Activated naive CD4-positive, alpha-beta T cell treated with anti-CD3 and anti-CD28 coated beads, Interleukin-2, amount 10 ng/mL, durations not matched to agents 7 days and 5 days (primary cell): ENCODE measurements at regions of chr19 and their contacts with region 1.

Region 1: DNA sequence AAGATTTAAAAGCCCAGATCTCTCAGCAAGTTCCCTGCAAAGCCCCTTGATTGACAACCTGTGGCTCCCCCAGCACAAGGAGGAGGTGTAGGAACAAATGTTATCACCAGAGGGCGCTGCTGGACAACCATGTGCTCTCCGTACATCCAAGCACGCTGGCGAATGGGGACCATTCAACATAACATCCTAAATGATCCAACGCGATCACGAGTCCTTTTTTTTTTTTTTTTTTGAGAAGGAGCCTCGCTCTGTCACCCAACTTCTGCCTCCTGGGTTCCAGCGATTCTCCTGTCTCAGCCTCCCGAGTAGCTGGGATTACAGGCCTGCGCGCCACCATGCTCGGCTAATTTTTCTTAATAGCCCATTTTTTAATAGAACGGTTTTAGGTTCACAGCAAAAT is 52.0 kb downstream of the NWD1 start:
- DNase-seq: peak; percentile 86
- H3K4me3 Mint-ChIP-seq: no peak overlapping the region
- H3K27ac Mint-ChIP-seq: no peak overlapping the region
- H3K4me1 Mint-ChIP-seq: no peaks in the 10 kb centered on the region
- H3K27me3 Mint-ChIP-seq: peaks cover 31% of the 10 kb centered on the region

Region 2: DNA sequence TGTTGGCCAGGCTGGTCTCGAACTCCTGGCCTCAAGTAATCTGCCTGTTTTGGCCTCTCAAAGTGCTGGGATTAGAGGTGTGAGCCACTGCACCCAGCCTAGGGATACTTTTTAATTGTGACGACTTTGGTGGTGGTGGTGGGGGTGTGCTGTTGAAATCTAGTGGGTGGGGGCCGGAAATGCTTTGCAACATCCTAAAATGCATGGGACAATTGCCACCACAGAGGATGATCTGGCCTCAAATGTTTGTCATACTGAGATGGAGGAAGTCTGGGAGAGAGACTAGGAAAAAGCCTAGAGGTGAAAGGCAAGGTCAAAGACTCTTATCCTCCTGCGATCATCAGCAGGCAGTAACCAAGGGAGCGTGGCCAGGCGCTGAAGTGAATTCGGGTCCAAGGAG is 50.6 kb before region 1 on chr19:
- CTCF ChIA-PET with region 1: no interaction called
- DNase-seq: no peak
- H3K4me3 Mint-ChIP-seq: no peak overlapping the region
- H3K27ac Mint-ChIP-seq: no peak overlapping the region
- H3K4me1 Mint-ChIP-seq: peaks cover 6% of the 10 kb centered on the region
- H3K27me3 Mint-ChIP-seq: no peaks in the 10 kb centered on the region

Region 3: GRCh38 chr19:16899566-16900075 is 128.0 kb after region 1 on chr19:
- CTCF ChIA-PET with region 1: interaction called, 10 read pairs
- DNase-seq: peak; percentile 66
- H3K4me3 Mint-ChIP-seq: peak overlapping the region; percentile 39
- H3K27ac Mint-ChIP-seq: peak overlapping the region; percentile 11
- H3K4me1 Mint-ChIP-seq: peaks cover 34% of the 10 kb centered on the region
- H3K27me3 Mint-ChIP-seq: peaks cover 57% of the 10 kb centered on the region

Region 4: DNA sequence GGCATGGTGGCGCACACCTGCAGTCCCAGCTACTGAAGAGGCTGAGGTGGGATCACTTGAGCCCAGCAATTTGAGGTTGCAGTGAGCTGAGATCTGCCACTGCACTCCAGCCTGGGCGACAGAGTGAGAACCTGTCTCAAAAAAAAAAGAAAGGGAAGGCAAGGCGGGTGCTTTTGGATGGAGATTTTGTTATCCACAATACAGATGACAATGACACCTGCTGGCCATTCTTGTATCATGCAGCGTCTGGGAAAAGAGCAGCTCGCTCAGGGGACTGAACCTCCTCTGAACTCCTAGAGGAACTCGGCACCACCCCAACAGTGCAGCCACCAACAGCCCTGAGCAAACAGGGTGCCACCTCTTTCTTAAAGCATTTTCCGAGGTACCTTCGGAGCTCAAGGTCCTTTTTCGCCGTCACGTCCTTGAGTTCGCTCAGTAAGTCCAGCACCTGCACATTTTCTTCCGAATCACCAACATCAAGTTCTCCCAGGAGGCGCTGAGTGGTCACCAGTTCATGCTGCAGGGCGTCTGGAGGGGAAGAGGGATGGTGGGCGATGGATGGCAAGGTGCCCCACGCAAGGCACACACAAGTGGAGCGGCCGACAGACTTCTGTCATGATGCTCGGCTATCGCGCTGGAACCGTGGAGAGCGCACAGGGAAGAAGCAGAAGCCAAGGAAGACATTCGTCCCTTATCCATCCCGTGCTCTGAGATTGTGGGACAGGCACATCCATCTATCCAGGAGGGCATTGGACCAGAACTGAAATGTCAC is 281.0 kb after region 1 on chr19:
- CTCF ChIA-PET with region 1: interaction called, 14 read pairs
- DNase-seq: peak; percentile 63
- H3K4me3 Mint-ChIP-seq: no peak overlapping the region
- H3K27ac Mint-ChIP-seq: peak overlapping the region; percentile 33
- H3K4me1 Mint-ChIP-seq: no peaks in the 10 kb centered on the region
- H3K27me3 Mint-ChIP-seq: no peaks in the 10 kb centered on the region